Calu3 (cell line): ENCODE measurements at regions of chr15 and their contacts with region 1.

Region 1: DNA sequence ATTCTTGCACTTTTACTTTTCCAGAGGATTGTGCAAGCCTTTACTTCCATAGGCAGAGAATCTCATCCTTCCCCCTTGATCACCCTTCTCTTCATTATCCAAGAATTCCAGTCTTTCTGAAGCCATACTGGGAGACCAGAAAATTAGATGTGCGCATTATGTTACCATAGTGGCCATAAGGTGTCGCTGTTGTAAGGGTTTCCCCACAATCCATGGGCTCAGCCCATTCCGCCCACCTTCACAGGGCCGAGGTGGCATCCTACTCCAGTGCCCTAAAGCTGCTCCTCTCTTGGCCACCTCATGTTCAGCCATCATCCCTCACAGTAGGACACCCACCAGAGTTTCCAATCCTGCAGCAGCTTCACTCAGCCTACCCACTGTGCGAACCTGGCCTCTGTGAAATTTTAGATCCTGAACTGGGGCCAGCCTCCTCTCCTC is 35.0 kb downstream of the CTSH start:
- DNase-seq: peak; percentile 67
- H3K4me3 Mint-ChIP-seq: no peak overlapping the region
- H3K27ac Mint-ChIP-seq: peak overlapping the region; percentile 9
- H3K4me1 Mint-ChIP-seq: peaks cover 7% of the 10 kb centered on the region
- H3K27me3 Mint-ChIP-seq: no peaks in the 10 kb centered on the region
- CTCF ChIP-seq: peak; percentile 73

Region 2: GRCh38 chr15:78968539-78969271 is 58.9 kb after region 1 on chr15:
- CTCF ChIA-PET with region 1: no interaction called
- intact Hi-C with region 1: no loop called
- DNase-seq: peak; percentile 52
- H3K4me3 Mint-ChIP-seq: peak overlapping the region; percentile 5
- H3K27ac Mint-ChIP-seq: peak overlapping the region; percentile 82
- H3K4me1 Mint-ChIP-seq: peaks cover 39% of the 10 kb centered on the region
- H3K27me3 Mint-ChIP-seq: no peaks in the 10 kb centered on the region
- CTCF ChIP-seq: no peak

Region 3: GRCh38 chr15:79028411-79028964 is 118.7 kb after region 1 on chr15:
- CTCF ChIA-PET with region 1: no interaction called
- intact Hi-C with region 1: loop called (anchors 5 kb)
- DNase-seq: peak; percentile 61
- H3K4me3 Mint-ChIP-seq: no peak overlapping the region
- H3K27ac Mint-ChIP-seq: no peak overlapping the region
- H3K4me1 Mint-ChIP-seq: no peaks in the 10 kb centered on the region
- H3K27me3 Mint-ChIP-seq: peaks cover 15% of the 10 kb centered on the region
- CTCF ChIP-seq: peak; percentile 84

Region 4: GRCh38 chr15:79373113-79373512 is 463.3 kb after region 1 on chr15:
- CTCF ChIA-PET with region 1: no interaction called
- intact Hi-C with region 1: no loop called
- DNase-seq: no peak
- H3K4me3 Mint-ChIP-seq: no peak overlapping the region
- H3K27ac Mint-ChIP-seq: no peak overlapping the region
- H3K4me1 Mint-ChIP-seq: no peaks in the 10 kb centered on the region
- H3K27me3 Mint-ChIP-seq: no peaks in the 10 kb centered on the region
- CTCF ChIP-seq: no peak

Region 5: DNA sequence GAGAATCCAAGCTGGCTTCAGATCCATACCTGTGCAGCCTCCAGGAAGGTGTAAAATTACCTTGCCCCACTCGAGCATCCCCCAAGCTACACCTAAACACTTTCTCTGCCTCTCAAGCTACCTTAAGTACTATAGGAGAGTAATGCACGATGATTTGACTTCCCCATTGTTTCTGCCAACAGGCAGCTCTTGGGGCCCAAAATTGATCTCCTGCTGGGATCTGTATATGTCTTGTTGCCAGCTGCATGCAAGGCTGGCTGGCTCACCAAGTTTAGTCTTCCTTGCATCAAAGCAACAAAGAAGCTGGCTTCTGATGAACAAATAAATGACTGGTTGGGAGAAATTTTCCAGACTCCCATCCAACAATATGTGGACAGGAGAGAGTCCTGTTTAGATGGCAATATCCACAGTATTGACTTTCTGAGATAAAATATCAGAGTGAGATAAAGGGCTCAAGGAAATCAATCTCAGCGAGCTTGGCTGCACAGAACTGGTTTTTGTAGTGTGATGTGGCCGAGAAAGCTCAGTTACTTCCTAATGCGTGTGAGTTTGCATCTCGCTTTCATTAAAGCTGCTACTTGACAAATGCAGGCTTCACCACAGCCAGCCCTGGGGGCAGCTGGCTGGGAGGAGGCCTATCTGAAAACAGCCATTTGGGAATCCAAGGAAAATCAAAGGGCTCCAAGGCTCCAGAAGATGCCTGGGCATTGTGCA is 663.0 kb after region 1 on chr15:
- CTCF ChIA-PET with region 1: no interaction called
- intact Hi-C with region 1: no loop called
- DNase-seq: no peak
- H3K4me3 Mint-ChIP-seq: no peak overlapping the region
- H3K27ac Mint-ChIP-seq: no peak overlapping the region
- H3K4me1 Mint-ChIP-seq: no peaks in the 10 kb centered on the region
- H3K27me3 Mint-ChIP-seq: no peaks in the 10 kb centered on the region
- CTCF ChIP-seq: no peak